Activated CD4-positive, alpha-beta memory T cell treated with anti-CD3 and anti-CD28 coated beads for 36 hours (primary cell): ENCODE measurements at regions of chr4 and their contacts with region 1.

Region 1: GRCh38 chr4:164977243-164978164 is at the start of gene TRIM61:
- DNase-seq: peak; percentile 69
- H3K4me3 Mint-ChIP-seq: peak within 1 kb of the TSS; percentile 73
- H3K27ac Mint-ChIP-seq: peak within 1 kb of the TSS; percentile 59
- H3K4me1 Mint-ChIP-seq: no peaks in the 10 kb centered on the region
- H3K27me3 Mint-ChIP-seq: peaks cover 4% of the 10 kb centered on the region
- total RNA-seq, gene TRIM61: 1.0 TPM

Region 2: DNA sequence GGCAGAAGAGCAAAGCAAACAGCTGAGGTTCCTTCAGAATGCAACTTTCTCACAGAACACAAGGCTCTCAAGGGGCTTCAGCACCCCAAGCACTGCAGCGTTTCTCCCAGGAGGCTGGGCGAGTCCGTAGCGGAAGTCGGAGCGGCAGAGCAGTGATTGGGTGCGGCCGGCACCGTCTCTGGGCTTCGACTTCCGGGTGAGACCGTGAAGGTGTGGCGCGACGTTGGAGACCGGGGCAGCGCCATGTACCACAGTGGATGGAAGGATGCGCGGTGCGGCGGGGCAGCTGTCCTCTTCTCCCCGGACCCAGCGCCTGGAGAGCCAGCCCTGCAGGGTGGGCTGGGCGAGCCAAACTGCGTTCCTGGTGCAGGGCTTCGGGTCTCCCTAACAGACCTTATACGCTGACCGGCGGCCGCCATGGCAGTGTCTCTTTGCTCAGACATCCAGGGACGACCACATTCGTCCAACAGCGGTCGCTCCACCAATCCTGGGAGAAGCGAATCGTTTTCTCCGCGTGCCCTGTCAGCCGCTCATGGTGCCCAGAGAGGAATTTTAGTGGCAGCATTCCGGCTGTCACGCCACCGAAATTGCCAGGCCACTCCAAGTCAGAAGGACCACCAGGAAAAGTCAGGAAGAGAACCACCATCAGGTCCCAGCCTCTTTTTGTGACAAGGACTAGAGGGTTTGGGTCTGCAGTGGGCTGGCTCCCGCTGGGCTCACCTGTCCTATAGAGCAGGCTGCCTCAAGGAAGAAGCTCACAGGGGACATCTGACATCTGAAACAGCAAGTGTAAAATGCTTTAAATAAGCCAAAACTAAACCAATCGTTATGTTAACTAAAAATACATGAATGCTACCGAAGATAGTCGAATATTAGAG is 20.5 kb before region 1 on chr4:
- CTCF ChIA-PET with region 1: no interaction called
- POLR2A ChIA-PET with region 1: interaction called, 4 read pairs
- intact Hi-C with region 1: loop called (anchors 1 kb)
- DNase-seq: peak; percentile 87
- H3K4me3 Mint-ChIP-seq: peak overlapping the region; percentile 90
- H3K27ac Mint-ChIP-seq: no peak overlapping the region
- H3K4me1 Mint-ChIP-seq: peaks cover 14% of the 10 kb centered on the region
- H3K27me3 Mint-ChIP-seq: peaks cover 1% of the 10 kb centered on the region

Region 3: DNA sequence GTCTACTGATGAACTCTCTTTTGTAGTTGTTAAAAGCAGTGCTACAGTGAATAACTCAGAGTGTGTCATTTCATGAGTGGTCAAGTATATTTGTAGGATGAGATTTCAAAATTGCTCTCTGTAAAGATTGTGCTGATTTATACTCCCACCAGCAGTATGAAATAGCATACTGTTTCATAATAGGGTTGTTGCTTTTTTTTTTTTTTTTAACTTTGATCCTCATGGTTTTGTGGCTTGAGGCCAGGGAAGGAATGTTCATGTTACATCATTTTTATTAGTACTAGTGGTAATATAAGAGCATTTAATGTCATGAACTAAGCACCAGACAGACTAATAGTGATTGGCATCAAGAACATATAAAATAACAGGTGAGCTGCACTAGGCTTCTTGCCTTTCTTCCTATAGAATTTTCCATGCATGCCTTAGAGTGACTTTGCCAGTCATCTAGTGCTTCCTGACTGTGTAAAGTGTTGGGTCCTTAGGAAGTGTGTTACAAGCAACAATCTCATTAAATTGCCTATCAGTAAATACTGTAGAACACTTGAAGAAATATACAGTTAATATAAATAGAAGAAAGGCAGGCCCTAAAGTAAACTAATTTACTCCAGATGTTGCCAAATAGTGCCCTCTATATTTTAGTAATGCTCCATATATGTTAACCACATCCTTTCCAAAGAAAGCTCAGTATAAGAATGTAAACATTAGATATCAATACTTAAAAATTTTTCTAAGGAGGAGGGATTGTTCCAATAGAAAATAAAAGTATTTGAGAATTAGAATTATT is 311.3 kb after region 1 on chr4:
- CTCF ChIA-PET with region 1: no interaction called
- POLR2A ChIA-PET with region 1: no interaction called
- intact Hi-C with region 1: no loop called
- DNase-seq: no peak
- H3K4me3 Mint-ChIP-seq: no peak overlapping the region
- H3K27ac Mint-ChIP-seq: no peak overlapping the region
- H3K4me1 Mint-ChIP-seq: peaks cover 38% of the 10 kb centered on the region
- H3K27me3 Mint-ChIP-seq: no peaks in the 10 kb centered on the region